ENCODE measurements at regions of chr6 and their contacts with region 1.

Region 1: GRCh38 chr6:106325336-106326178 is at the start of gene ATG5:
- DNase-seq: peak; percentile 98
- H3K4me3 Mint-ChIP-seq: peak within 1 kb of the TSS; percentile 99
- H3K27ac Mint-ChIP-seq: peak within 1 kb of the TSS; percentile 99
- H3K4me1 Mint-ChIP-seq: peaks cover 34% of the 10 kb centered on the region
- H3K27me3 Mint-ChIP-seq: no peaks in the 10 kb centered on the region
- CTCF ChIP-seq: no peak
- total RNA-seq, gene ATG5: 26.4 and 33.3 TPM in 2 replicates

Region 2: DNA sequence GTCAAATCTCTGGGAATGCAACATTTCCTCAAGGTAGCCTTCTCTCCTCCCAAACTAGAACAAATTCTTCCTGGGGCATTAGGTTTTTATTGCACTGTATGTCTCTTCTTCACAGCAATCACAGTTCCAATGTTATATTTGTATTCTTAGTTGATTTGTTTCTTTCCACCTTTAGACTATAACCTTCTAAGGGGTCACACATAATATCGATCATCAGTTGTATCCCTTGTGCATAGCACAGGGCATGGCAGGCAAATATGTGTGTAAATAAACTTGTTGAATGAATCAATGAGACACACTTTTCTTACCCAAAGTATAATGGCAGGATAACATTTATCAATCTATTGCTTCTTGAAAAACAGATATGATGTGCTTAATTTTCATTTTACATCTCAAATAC is 81.0 kb before region 1 on chr6:
- CTCF ChIA-PET with region 1: no interaction called
- POLR2A ChIA-PET with region 1: no interaction called
- intact Hi-C with region 1: no loop called
- DNase-seq: no peak
- H3K4me3 Mint-ChIP-seq: no peak overlapping the region
- H3K27ac Mint-ChIP-seq: no peak overlapping the region
- H3K4me1 Mint-ChIP-seq: no peaks in the 10 kb centered on the region
- H3K27me3 Mint-ChIP-seq: no peaks in the 10 kb centered on the region
- CTCF ChIP-seq: no peak

Region 3: DNA sequence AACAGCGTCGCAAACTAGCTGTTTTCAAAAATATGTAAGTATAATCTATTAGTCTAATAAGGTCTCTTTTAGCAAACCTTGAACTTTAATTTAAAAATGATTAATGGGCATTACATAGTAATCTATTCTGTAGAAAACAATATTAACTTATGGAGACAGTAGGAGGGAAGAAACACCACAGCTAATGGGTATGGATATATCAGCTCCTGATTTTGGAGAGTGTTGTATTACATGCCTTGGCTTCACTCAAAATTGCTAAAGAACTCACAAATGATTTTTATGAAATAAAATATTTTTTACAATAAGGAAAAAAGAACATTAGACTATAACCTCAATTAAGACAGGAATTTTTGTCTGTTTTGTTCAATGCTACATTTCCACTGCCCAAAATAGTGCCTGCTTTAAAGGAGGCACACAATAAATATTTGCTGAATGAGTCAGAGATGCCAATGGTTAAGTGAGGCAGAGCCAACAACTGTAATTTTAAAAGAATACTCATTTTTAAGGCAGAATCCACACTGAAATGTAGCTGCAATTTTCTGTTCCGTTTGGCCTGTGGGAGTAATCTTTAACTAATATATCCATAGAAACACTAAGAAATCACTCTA is 15.7 kb before region 1 on chr6:
- CTCF ChIA-PET with region 1: interaction called, 3 read pairs
- POLR2A ChIA-PET with region 1: interaction called, 30 read pairs
- intact Hi-C with region 1: no loop called
- DNase-seq: peak; percentile 50
- H3K4me3 Mint-ChIP-seq: no peak overlapping the region
- H3K27ac Mint-ChIP-seq: peak overlapping the region; percentile 90
- H3K4me1 Mint-ChIP-seq: peaks cover 43% of the 10 kb centered on the region
- H3K27me3 Mint-ChIP-seq: no peaks in the 10 kb centered on the region
- CTCF ChIP-seq: no peak

Region 4: DNA sequence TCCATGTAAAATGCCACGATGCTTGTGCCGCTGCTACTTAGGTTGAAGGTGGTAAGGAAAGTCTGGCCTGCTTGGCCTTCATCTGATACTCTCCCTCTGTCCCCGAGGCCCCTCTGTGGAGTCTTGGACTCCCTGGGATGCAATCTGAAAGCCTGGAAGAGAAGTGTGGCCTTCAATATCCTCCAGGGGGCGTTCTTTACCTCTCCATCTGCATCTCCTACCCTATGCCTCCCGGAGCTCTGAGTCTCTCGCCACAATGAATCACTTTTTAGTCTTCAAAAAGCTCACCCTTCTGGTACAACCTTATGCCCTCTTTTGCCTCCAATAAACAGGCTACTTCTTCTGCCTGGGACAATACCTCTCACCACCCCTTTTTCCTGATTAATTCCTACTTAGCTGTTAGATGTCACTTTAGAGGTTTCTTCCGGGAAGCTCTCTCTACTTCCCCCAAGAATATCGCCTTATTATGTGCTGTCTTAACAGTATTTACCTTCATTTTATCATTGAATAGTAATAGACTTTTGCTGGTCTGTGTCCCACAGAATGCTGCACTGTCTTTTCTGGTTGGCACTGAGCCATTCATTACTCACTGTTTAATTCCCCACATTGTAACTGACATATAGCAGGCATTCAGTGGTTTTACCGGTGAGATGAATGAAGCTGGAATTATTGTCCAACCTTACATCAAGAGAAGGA is 13.9 kb after region 1 on chr6:
- CTCF ChIA-PET with region 1: interaction called, 24 read pairs
- POLR2A ChIA-PET with region 1: interaction called, 15 read pairs
- intact Hi-C with region 1: no loop called
- DNase-seq: peak; percentile 87
- H3K4me3 Mint-ChIP-seq: peak overlapping the region; percentile 61
- H3K27ac Mint-ChIP-seq: peak overlapping the region; percentile 43
- H3K4me1 Mint-ChIP-seq: peaks cover 11% of the 10 kb centered on the region
- H3K27me3 Mint-ChIP-seq: no peaks in the 10 kb centered on the region
- CTCF ChIP-seq: peak; percentile 68

Region 5: DNA sequence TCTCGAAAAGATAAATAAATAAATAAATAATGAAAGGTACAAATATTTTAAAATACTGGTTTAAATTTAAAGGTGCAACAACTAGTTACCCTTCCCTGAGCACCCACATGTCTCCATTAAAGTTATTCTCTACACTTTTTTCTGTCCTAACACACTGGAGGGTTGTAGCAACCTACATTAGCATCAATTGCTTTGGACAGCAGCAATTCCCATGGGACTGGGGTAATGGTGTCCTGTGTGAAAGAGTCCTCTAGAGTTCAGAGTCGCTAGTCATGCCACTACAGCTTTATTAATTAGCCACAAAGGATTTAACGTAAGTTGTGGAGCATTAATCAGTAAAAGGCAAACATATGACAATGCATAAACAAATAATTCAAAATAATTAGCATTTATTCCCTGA is 663.1 kb after region 1 on chr6:
- CTCF ChIA-PET with region 1: no interaction called
- POLR2A ChIA-PET with region 1: no interaction called
- intact Hi-C with region 1: no loop called
- DNase-seq: no peak
- H3K4me3 Mint-ChIP-seq: no peak overlapping the region
- H3K27ac Mint-ChIP-seq: no peak overlapping the region
- H3K4me1 Mint-ChIP-seq: no peaks in the 10 kb centered on the region
- H3K27me3 Mint-ChIP-seq: no peaks in the 10 kb centered on the region
- CTCF ChIP-seq: no peak

Measured in MCF 10A (cell line).